Motor neuron (in vitro differentiated cells): ENCODE measurements at regions of chr2 and their contacts with region 1.

Region 1: DNA sequence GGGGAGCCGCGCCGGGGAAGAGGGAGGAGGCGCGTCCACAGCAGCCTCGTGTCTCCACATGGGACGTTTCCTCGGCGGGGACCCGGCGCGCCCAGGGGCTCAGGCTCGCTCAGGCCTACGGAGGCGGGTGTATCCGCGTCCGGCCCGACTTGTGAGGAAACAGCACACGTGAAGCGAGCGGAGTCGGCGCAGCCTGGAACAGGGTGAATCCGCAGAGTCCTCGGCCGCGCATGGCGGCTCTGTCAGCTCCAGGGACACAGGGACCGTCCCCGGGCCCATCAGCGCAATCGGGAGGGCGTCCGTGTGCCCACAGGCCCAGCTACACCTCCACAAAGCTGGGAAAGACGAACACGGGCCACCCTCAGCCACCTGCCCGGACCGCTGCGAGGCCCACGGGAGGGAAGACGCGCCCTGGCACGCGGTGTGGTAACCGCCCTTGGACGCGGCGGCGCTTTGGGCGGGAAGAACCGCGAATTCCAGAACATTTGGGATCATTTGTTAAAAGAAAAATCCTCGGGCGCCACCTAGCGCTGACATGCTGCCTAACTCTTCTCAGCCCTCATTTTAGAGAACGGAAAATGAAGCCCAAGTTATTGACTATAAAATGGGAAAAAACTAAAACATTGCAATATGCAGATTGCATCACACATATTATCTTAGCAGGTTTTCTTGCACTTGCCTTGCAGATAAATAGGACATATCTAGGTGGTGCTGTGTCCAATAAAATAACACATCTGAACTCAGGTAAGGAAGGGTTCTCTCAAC is 40.4 kb downstream of the TMEM18 start:
- ATAC-seq: peak; percentile 39 to 87 (median 56)
- H3K4me3 ChIP-seq: no peak overlapping the region
- H3K27ac ChIP-seq: no peak overlapping the region
- H3K4me1 ChIP-seq: peaks cover 5% of the 10 kb centered on the region in 2 donors

Region 2: GRCh38 chr2:529425-529824 is 107.4 kb before region 1 on chr2:
- in situ Hi-C with region 1: loop called in 2 of 9 experiments (anchors 25 kb)
- ATAC-seq: peak in 5 of 8 experiments; percentile 22 to 74 (median 54)
- H3K4me3 ChIP-seq: no peak overlapping the region
- H3K27ac ChIP-seq: no peak overlapping the region
- H3K4me1 ChIP-seq: no peaks in the 10 kb centered on the region

Region 3: DNA sequence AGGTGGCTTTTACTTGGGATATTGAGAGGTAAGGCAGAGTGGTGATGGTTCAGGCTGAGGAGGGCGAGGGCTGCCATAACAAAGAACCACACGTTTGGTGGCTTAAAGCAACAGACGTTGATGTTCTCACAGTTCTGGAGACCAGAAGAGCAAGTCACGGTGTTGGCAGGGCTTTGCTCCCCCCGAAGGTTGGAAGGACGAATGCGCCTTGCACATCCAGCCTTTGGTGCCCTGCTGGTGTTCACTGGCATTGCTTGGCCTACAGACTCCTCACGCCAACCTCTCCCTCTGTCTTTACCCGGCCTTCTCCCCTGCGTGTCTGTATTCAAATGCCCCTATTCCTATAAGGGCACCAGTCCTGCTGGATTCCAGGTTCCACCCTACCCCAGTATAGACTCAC is 901.8 kb after region 1 on chr2:
- in situ Hi-C with region 1: no loop called
- ATAC-seq: peak in 4 of 8 experiments; percentile 38 to 87 (median 54)
- H3K4me3 ChIP-seq: no peak overlapping the region
- H3K27ac ChIP-seq: no peak overlapping the region
- H3K4me1 ChIP-seq: peaks cover 11 to 13% of the 10 kb centered on the region in 2 donors